Heart left ventricle (tissue), 16 donors: ENCODE measurements at regions of chr19 and their contacts with region 1.

Region 1: GRCh38 chr19:55586976-55587668 is 6.5 kb upstream of the ZNF579 start:
- DNase-seq: peak; percentile 94 to 97 (median 95)
- ATAC-seq: peak; percentile 83 to 94 (median 88)
- H3K4me3 ChIP-seq: peak overlapping the region in 10 of 12 donors; percentile 20 to 49 (median 42)
- H3K27ac ChIP-seq: peak overlapping the region in 6 of 12 donors; percentile 9 to 82 (median 24)
- H3K4me1 ChIP-seq: peaks cover 0 to 27% (median 19%) of the 10 kb centered on the region in 12 donors
- H3K27me3 ChIP-seq: peaks cover 0 to 10% (median 0%) of the 10 kb centered on the region in 9 donors
- CTCF ChIP-seq: no peak
- POLR2A ChIP-seq: no peak

Region 2: GRCh38 chr19:55638864-55639359 is 51.8 kb after region 1 on chr19:
- intact Hi-C with region 1: loop called in 2 of 10 experiments (anchors 5 kb)
- DNase-seq: peak in 2 of 5 donors; percentile 17 to 37
- ATAC-seq: no peak
- H3K4me3 ChIP-seq: no peak overlapping the region
- H3K27ac ChIP-seq: peak overlapping the region in 2 of 12 donors; percentile 84 to 96
- H3K4me1 ChIP-seq: peaks cover 15 to 81% (median 52%) of the 10 kb centered on the region in 12 donors
- H3K27me3 ChIP-seq: no peaks in the 10 kb centered on the region
- CTCF ChIP-seq: peak in 10 of 12 donors; percentile 20 to 56 (median 28)
- POLR2A ChIP-seq: peak in 1 of 2 donors; percentile 15